ENCODE measurements at regions of chr17 and their contacts with region 1.

Region 1: DNA sequence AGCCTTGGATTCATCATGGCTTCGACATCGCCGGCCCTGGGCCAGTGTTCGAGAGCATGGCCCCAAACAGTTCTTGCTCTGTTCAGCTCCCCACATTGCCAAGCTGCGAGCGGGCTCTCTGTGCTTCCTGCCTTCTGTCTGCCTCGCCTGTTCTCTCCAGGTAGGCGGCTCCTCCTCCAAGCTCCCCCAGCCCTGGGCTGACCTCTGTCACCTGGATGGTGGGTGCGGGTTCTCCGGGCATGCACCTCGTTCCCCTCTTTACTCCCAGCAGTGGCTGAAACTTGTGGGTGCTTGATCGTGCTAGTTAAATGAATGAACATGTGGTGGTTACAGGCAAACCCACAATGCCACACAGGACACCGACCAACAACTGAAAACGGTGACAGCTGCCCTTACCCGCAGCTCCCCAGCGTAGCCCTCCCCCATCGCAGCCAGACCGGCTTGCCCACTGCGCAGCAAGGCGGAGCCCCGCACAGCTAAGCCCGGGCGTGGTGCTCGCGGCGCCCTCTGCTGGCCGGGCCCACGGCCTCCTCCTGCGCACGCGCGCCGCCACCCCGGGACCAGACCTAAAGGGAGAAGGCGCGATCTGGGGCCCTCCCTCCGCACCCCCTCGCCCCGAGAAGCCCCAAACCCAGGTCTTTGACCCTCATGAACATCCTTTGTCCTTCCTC is 23.0 kb upstream of the EIF1 start:
- DNase-seq: peak; percentile 89 to 100
- ATAC-seq: peak; percentile 72 to 91
- H3K4me3 ChIP-seq: peak overlapping the region; percentile 47
- H3K27ac ChIP-seq: peak overlapping the region; percentile 86 to 92
- H3K4me1 ChIP-seq: peaks cover 23% of the 10 kb centered on the region
- CTCF ChIP-seq: peak; percentile 98
- EP300 ChIP-seq: no peak
- POLR2A ChIP-seq: peak; percentile 74
- RAD21 ChIP-seq: peak in 1 of 2 experiments; percentile 46; a peak in 2 of 5 replicates

Region 2: DNA sequence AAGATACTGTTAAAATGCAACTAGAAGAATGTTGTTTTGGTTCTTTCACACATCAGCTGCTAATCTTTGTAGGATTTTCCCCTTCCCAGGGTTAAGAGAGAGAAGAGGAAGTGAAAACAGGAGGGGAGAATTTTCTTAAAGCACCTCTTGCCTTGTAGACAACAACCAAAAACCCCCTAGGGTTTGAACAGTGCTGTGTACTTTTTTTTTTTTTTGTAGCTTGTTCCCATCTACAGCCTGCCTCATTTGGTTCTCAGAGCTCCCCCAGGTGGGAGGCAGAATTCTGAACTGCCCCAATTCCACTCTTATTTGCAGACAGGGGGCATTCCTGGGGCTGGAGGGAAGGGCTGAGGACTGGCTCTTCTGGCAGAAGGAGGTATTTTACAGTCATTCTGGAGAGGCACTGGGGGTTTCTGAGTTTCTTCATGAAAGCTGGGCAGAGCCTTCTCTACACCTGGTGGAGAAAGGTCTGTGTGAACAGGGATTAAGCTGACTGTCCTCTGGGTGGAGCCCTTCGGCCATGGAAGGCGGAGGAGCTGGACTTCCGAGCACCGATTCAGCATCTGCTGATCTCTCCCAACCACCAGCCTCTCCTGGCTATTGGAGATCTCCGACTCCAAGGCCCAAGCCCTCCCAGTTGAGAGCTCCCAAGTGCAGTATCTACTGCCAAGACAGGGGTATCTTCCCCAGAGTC is 1050.3 kb before region 1 on chr17:
- CTCF ChIA-PET with region 1: interaction called, 53 read pairs
- POLR2A ChIA-PET with region 1: interaction called, 4 read pairs
- DNase-seq: peak; percentile 84 to 91
- ATAC-seq: peak; percentile 84 to 93
- H3K4me3 ChIP-seq: no peak overlapping the region
- H3K27ac ChIP-seq: peak overlapping the region in 1 of 2 experiments; percentile 45; a peak in 2 of 6 replicates
- H3K4me1 ChIP-seq: peaks cover 12% of the 10 kb centered on the region
- CTCF ChIP-seq: peak; percentile 93
- EP300 ChIP-seq: no peak
- POLR2A ChIP-seq: no peak
- RAD21 ChIP-seq: peak; percentile 94 to 96

Region 3: DNA sequence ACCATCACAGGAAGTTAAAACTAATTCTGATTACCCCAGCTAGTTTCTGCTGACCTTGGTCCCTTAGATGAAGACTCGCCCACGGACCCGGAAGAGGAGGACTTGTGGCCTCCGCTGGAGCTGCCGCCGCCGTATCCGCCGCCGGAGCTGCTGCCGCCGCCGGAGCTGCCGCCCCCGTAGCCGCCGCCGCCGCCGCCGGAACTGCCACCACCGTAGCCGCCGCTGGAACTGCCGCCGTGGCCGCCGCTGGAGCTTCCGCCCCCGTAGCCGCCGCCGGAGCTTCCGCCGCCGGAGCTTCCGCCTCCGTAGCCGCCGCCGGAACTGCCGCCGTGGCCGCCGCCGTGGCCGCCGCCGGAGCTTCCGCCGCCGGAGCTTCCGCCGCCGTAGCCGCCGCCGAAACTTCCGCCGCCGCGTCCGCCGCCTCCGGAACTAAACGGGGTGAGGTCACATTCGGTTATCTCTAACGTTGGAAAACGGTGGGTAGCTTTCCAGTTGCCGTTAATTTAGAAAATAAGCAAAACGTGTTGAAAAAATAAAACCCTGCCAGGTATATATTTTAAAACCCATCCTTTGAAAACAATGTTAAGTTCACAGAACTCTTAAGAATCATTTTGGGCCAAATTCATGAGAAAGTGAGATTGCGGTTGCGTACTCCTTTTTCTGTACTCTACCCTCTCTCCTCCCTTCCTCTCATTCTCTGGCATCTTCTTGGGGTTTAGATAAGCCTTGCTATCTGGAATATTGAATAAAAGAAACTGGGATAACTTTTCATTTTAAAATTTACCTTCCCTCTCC is 846.8 kb before region 1 on chr17:
- CTCF ChIA-PET with region 1: interaction called, 51 read pairs
- POLR2A ChIA-PET with region 1: interaction called, 5 read pairs
- DNase-seq: peak; percentile 80 to 88
- ATAC-seq: peak; percentile 93 to 95
- H3K4me3 ChIP-seq: peak overlapping the region; percentile 79
- H3K27ac ChIP-seq: peak overlapping the region; percentile 86 to 94
- H3K4me1 ChIP-seq: peaks cover 16% of the 10 kb centered on the region
- CTCF ChIP-seq: no peak
- EP300 ChIP-seq: no peak
- POLR2A ChIP-seq: peak; percentile 41
- RAD21 ChIP-seq: no peak; a peak in 1 of 5 replicates

Region 4: DNA sequence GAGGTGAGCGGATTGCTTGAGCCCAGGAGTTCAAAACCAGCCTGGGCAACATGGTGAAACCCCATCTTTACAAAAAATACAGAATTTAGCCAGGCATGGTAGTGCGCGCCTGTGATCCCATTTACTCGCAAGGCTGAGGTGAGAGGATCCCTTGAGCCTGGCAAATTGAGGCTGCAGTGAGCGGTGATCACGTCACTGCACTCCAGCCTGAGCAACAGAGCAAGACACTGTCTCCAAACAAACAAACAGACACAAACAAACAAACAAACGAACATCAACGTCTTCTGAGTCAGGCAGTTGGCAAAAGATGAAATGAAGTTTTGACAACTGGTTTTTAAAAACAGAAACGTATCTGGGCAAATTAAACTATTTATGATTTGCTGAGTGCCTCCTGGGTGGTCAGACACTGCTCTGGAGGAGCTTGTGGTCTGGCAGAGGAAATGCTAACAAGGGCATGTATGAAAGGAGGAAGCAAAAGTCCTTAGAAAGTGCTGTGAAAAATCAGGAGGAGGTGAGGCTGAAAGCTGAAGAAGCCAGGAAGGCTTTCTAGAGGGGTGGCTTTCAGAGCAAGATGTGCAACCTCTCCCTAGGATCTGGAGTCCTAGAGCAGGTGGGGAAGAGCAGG is 770.5 kb before region 1 on chr17:
- CTCF ChIA-PET with region 1: interaction called, 76 read pairs
- POLR2A ChIA-PET with region 1: no interaction called
- DNase-seq: peak in 1 of 2 experiments; percentile 40
- ATAC-seq: peak; percentile 28 to 84; a peak in 3 of 6 replicates
- H3K4me3 ChIP-seq: no peak overlapping the region
- H3K27ac ChIP-seq: peak overlapping the region; percentile 62 to 64
- H3K4me1 ChIP-seq: peaks cover 11% of the 10 kb centered on the region
- CTCF ChIP-seq: no peak
- EP300 ChIP-seq: no peak
- POLR2A ChIP-seq: no peak
- RAD21 ChIP-seq: no peak

Region 5: GRCh38 chr17:41352597-41353366 is 312.9 kb before region 1 on chr17:
- CTCF ChIA-PET with region 1: interaction called, 11 read pairs
- POLR2A ChIA-PET with region 1: no interaction called
- DNase-seq: no peak
- ATAC-seq: peak in 1 of 2 experiments; percentile 47; a peak in 1 of 6 replicates
- H3K4me3 ChIP-seq: no peak overlapping the region
- H3K27ac ChIP-seq: no peak overlapping the region
- H3K4me1 ChIP-seq: no peaks in the 10 kb centered on the region
- CTCF ChIP-seq: no peak
- EP300 ChIP-seq: no peak
- POLR2A ChIP-seq: no peak
- RAD21 ChIP-seq: no peak

Region 6: DNA sequence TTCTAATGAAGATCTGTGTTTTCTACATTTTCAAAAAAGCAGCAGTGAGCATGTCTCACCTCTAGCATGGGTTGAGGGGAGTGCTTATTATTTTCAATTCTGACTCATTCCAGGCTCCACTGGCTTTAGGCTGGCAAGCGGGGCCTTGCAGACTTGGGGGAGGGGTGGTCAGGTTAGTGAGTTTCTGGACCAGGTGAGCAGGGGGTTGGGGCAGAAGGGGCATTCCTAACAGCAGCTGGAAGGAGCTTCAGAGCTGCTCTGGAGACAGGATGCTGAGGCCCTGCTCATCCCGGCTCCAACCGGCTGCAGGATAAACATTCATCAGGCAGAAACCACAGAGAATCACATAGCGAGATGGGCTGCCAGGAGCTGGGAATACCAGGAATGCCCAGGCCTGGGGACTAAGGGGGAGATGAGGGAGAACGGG is 127.1 kb before region 1 on chr17:
- CTCF ChIA-PET with region 1: interaction called, 29 read pairs
- POLR2A ChIA-PET with region 1: no interaction called
- DNase-seq: no peak
- ATAC-seq: no peak
- H3K4me3 ChIP-seq: no peak overlapping the region
- H3K27ac ChIP-seq: peak overlapping the region in 1 of 2 experiments; percentile 40; a peak in 3 of 6 replicates
- H3K4me1 ChIP-seq: peaks cover 16% of the 10 kb centered on the region; the same call in 2 of the 3 replicates
- CTCF ChIP-seq: no peak
- EP300 ChIP-seq: no peak
- POLR2A ChIP-seq: no peak
- RAD21 ChIP-seq: no peak

Region 7: DNA sequence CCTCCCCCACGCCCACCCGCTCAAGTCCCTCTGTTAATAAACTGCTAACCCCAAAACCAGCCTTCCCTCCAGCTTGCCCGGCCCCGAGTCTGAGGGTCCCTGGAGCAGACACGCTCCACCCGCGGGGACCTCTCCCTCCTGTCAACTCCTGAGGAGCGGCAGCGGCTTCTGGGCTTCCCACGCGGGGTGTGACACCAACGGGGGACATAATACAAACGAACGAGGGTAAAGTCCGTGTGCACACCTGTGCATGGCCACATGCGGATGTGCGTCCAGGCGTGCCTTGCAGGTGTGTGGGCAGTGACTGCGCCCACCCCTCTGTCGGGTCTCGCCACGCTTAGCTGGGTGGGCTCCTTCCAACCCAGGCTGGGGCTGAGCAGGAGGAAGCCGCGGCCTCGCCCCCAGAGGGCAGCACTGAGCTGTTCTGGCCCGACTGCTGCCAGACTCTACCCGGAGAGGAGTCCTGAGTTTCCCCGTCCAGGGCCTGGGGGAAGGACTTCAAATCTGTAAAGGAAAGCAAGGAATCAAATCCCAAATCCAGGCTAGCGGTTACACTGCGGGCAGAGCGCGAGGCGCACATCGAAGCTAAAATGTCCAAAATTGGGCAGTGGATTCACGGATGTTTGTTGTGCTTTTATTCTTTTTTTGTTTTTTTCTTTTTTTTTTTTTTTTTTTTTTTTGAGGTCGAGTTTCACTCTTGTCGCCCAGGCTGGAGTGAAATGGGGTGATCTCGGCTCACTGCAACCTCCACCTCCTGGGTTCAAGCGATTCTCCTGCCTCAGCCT is 17.1 kb before region 1 on chr17:
- CTCF ChIA-PET with region 1: interaction called, 678 read pairs
- POLR2A ChIA-PET with region 1: interaction called, 5 read pairs
- DNase-seq: peak; percentile 92 to 93
- ATAC-seq: peak; percentile 84 to 94
- H3K4me3 ChIP-seq: peak overlapping the region; percentile 48
- H3K27ac ChIP-seq: peak overlapping the region; percentile 85 to 89
- H3K4me1 ChIP-seq: peaks cover 40% of the 10 kb centered on the region
- CTCF ChIP-seq: peak; percentile 93
- EP300 ChIP-seq: no peak
- POLR2A ChIP-seq: peak; percentile 38
- RAD21 ChIP-seq: peak; percentile 66 to 69

Region 8: GRCh38 chr17:41864498-41864835 is 198.8 kb after region 1 on chr17:
- CTCF ChIA-PET with region 1: no interaction called
- POLR2A ChIA-PET with region 1: no interaction called
- DNase-seq: no peak
- ATAC-seq: peak in 1 of 2 experiments; percentile 51; a peak in 2 of 6 replicates
- H3K4me3 ChIP-seq: peak overlapping the region; percentile 89
- H3K27ac ChIP-seq: peak overlapping the region; percentile 92 to 94
- H3K4me1 ChIP-seq: peaks cover 39% of the 10 kb centered on the region
- CTCF ChIP-seq: no peak
- EP300 ChIP-seq: no peak
- POLR2A ChIP-seq: no peak
- RAD21 ChIP-seq: no peak